CD8-positive, alpha-beta T cell (primary cell): ENCODE measurements at regions of chr10 and their contacts with region 1.

Region 1: GRCh38 chr10:122565728-122566206 is 5.2 kb downstream of the DMBT1 start:
- DNase-seq: peak; percentile 44 to 85 (median 74)
- ATAC-seq: no peak
- H3K4me3 ChIP-seq: no peak overlapping the region
- H3K4me3 Mint-ChIP-seq: no peak overlapping the region
- H3K27ac ChIP-seq: no peak overlapping the region
- H3K27ac Mint-ChIP-seq: no peak overlapping the region
- H3K4me1 ChIP-seq: no peaks in the 10 kb centered on the region
- H3K4me1 Mint-ChIP-seq: peaks cover 12% of the 10 kb centered on the region
- H3K27me3 ChIP-seq: no peaks in the 10 kb centered on the region
- H3K27me3 Mint-ChIP-seq: peaks cover 27% of the 10 kb centered on the region
- CTCF ChIP-seq: peak; percentile 83

Region 2: GRCh38 chr10:122307669-122308486 is 257.9 kb before region 1 on chr10:
- CTCF ChIA-PET with region 1: interaction called, 14 read pairs
- POLR2A ChIA-PET with region 1: no interaction called
- intact Hi-C with region 1: no loop called
- DNase-seq: no peak
- ATAC-seq: no peak
- H3K4me3 ChIP-seq: no peak overlapping the region
- H3K4me3 Mint-ChIP-seq: no peak overlapping the region
- H3K27ac ChIP-seq: no peak overlapping the region
- H3K27ac Mint-ChIP-seq: no peak overlapping the region
- H3K4me1 ChIP-seq: no peaks in the 10 kb centered on the region
- H3K4me1 Mint-ChIP-seq: no peaks in the 10 kb centered on the region
- H3K27me3 ChIP-seq: no peaks in the 10 kb centered on the region
- H3K27me3 Mint-ChIP-seq: peaks cover 9% of the 10 kb centered on the region
- CTCF ChIP-seq: no peak

Region 3: DNA sequence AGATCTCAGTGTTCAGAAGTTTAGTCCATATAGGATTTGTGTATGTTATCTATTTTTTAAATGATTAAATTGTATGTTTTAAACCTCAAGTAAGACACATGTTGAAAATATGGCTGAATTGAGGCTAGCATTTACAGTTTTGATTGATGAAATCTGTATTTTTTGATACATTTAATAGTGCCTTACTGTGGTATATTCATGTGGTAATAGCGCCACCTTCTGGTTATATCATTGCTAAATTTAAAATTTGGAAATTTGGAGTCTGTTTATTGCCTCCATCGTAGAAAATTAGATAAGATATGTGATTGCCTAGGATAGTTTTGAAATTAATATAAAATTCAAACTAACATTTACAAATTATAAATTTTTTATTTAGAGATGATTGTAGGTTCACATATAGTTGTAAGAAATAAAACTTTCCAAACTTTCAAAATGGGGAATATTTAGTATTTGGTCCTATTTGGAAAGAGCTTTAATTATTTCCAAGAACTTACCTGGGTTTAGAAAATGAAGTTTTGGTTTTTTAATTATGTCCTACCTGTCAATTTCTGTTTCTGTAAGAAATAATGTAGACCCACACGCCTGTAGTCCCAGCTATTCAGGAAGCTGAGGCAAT is 130.4 kb before region 1 on chr10:
- CTCF ChIA-PET with region 1: interaction called, 34 read pairs
- POLR2A ChIA-PET with region 1: no interaction called
- intact Hi-C with region 1: loop called (anchors 1 to 5 kb)
- DNase-seq: peak in 3 of 9 experiments; percentile 19 to 73 (median 63)
- ATAC-seq: peak; percentile 54
- H3K4me3 ChIP-seq: no peak overlapping the region
- H3K4me3 Mint-ChIP-seq: no peak overlapping the region
- H3K27ac ChIP-seq: no peak overlapping the region
- H3K27ac Mint-ChIP-seq: no peak overlapping the region
- H3K4me1 ChIP-seq: no peaks in the 10 kb centered on the region
- H3K4me1 Mint-ChIP-seq: no peaks in the 10 kb centered on the region
- H3K27me3 ChIP-seq: no peaks in the 10 kb centered on the region
- H3K27me3 Mint-ChIP-seq: no peaks in the 10 kb centered on the region
- CTCF ChIP-seq: peak; percentile 90

Region 4: DNA sequence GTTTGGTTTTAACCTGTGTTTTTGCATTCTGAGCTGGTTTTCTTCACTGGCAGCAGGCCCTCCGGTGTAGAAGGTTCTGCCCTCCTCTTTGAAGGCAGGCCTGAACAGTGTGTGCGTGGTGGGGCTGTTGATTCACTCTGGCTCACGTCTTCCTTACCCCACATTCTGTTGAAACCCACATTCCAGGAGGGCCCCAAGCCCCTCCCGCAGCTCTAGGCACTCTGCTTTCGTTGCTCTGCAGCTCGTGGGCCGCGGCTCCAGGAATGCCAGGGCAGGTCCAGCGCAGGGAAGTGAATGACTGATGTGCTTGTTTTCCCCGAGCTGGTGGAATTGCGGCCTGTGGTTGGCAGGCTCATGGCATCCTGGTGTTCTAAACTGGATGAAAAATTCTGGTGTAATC is 55.4 kb before region 1 on chr10:
- CTCF ChIA-PET with region 1: interaction called, 24 read pairs
- POLR2A ChIA-PET with region 1: no interaction called
- intact Hi-C with region 1: loop called (anchors 1 to 2 kb)
- DNase-seq: no peak
- ATAC-seq: no peak
- H3K4me3 ChIP-seq: no peak overlapping the region
- H3K4me3 Mint-ChIP-seq: no peak overlapping the region
- H3K27ac ChIP-seq: no peak overlapping the region
- H3K27ac Mint-ChIP-seq: no peak overlapping the region
- H3K4me1 ChIP-seq: peaks cover 12% of the 10 kb centered on the region
- H3K4me1 Mint-ChIP-seq: peaks cover 21% of the 10 kb centered on the region
- H3K27me3 ChIP-seq: no peaks in the 10 kb centered on the region
- H3K27me3 Mint-ChIP-seq: no peaks in the 10 kb centered on the region
- CTCF ChIP-seq: no peak

Region 5: DNA sequence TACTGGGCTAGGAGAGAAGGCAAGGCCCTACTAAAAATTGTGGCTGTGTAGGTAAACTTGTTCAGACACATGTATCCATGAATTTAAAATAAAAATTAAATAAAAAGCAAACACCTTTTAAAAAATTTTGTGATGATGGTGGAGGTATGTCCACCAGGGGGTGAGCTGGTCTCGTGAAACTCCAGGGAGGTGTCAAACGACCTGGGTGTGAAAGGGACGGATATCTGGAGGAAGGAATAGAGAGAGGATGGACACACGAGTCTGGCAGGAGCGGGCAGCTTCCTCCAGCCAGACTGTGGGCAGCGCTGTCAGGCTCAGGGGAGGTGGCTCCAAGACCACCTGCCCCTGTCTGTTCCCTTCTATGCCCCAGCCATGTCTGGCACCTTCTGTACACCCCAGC is 40.0 kb before region 1 on chr10:
- CTCF ChIA-PET with region 1: interaction called, 22 read pairs
- POLR2A ChIA-PET with region 1: interaction called, 3 read pairs
- intact Hi-C with region 1: loop called in 1 of 2 experiments (anchors 1 kb)
- DNase-seq: peak in 2 of 9 experiments; percentile 47 to 56
- ATAC-seq: no peak
- H3K4me3 ChIP-seq: no peak overlapping the region
- H3K4me3 Mint-ChIP-seq: no peak overlapping the region
- H3K27ac ChIP-seq: no peak overlapping the region
- H3K27ac Mint-ChIP-seq: no peak overlapping the region
- H3K4me1 ChIP-seq: no peaks in the 10 kb centered on the region
- H3K4me1 Mint-ChIP-seq: no peaks in the 10 kb centered on the region
- H3K27me3 ChIP-seq: no peaks in the 10 kb centered on the region
- H3K27me3 Mint-ChIP-seq: peaks cover 10% of the 10 kb centered on the region
- CTCF ChIP-seq: no peak

Region 6: GRCh38 chr10:122551450-122551849 is 14.3 kb before region 1 on chr10:
- CTCF ChIA-PET with region 1: interaction called, 10 read pairs
- POLR2A ChIA-PET with region 1: no interaction called
- intact Hi-C with region 1: no loop called
- DNase-seq: peak; percentile 24 to 76 (median 38)
- ATAC-seq: peak; percentile 52
- H3K4me3 ChIP-seq: no peak overlapping the region
- H3K4me3 Mint-ChIP-seq: peak overlapping the region; percentile 22
- H3K27ac ChIP-seq: no peak overlapping the region
- H3K27ac Mint-ChIP-seq: peak overlapping the region; percentile 52
- H3K4me1 ChIP-seq: peaks cover 16% of the 10 kb centered on the region
- H3K4me1 Mint-ChIP-seq: peaks cover 19% of the 10 kb centered on the region
- H3K27me3 ChIP-seq: no peaks in the 10 kb centered on the region
- H3K27me3 Mint-ChIP-seq: no peaks in the 10 kb centered on the region
- CTCF ChIP-seq: no peak

Region 7: GRCh38 chr10:122655524-122656307 is 89.9 kb after region 1 on chr10:
- CTCF ChIA-PET with region 1: no interaction called
- POLR2A ChIA-PET with region 1: no interaction called
- intact Hi-C with region 1: no loop called
- DNase-seq: no peak
- ATAC-seq: no peak
- H3K4me3 ChIP-seq: no peak overlapping the region
- H3K4me3 Mint-ChIP-seq: no peak overlapping the region
- H3K27ac ChIP-seq: no peak overlapping the region
- H3K27ac Mint-ChIP-seq: no peak overlapping the region
- H3K4me1 ChIP-seq: no peaks in the 10 kb centered on the region
- H3K4me1 Mint-ChIP-seq: no peaks in the 10 kb centered on the region
- H3K27me3 ChIP-seq: no peaks in the 10 kb centered on the region
- H3K27me3 Mint-ChIP-seq: peaks cover 13% of the 10 kb centered on the region
- CTCF ChIP-seq: no peak

Region 8: GRCh38 chr10:122688293-122688994 is 122.7 kb after region 1 on chr10:
- CTCF ChIA-PET with region 1: no interaction called
- POLR2A ChIA-PET with region 1: no interaction called
- intact Hi-C with region 1: no loop called
- DNase-seq: no peak
- ATAC-seq: no peak
- H3K4me3 ChIP-seq: no peak overlapping the region
- H3K4me3 Mint-ChIP-seq: no peak overlapping the region
- H3K27ac ChIP-seq: no peak overlapping the region
- H3K27ac Mint-ChIP-seq: no peak overlapping the region
- H3K4me1 ChIP-seq: no peaks in the 10 kb centered on the region
- H3K4me1 Mint-ChIP-seq: no peaks in the 10 kb centered on the region
- H3K27me3 ChIP-seq: peaks cover 0 to 2% of the 10 kb centered on the region in 2 experiments
- H3K27me3 Mint-ChIP-seq: peaks cover 29% of the 10 kb centered on the region
- CTCF ChIP-seq: no peak